Motor neuron (in vitro differentiated cells): ENCODE measurements at regions of chr3 and their contacts with region 1.

Region 1: DNA sequence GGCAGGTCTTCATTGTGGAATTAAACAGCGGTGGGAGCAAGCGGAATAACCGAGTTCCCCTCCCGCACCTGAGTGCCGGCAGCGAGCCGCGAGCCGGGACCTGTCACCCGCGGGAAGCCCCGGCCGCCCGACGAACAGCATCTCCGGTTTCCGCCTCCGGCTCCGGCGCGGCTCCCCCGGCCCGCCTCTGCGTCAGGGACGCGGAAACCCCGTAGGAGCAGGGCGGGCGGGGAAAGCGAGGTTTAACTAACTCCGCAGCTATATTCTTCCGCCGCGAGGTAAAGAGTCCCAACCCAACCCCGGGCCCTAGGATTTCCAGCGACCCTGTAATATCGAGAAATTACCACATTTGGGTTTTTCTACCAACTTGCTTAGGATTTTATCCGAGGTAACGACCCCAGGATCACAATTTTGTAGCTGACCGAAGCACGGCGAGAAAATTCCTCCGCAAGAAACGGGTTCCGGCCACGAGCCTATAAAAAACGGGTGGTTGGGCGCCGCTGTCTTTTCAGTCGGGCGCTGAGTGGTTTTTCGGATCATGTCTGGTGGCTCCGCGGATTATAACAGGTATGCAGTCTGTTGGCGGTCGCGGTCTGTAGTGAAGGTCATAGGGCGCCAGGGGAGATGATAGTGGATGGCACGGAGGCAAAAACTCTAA is at the start of gene EIF4A2:
- ATAC-seq: peak; percentile 64 to 81 (median 74)
- H3K4me3 ChIP-seq: peak within 1 kb of the TSS; percentile 88 to 95 (median 93)
- H3K27ac ChIP-seq: peak within 1 kb of the TSS; percentile 100
- H3K4me1 ChIP-seq: peaks cover 9 to 29% of the 10 kb centered on the region in 2 donors
- total RNA-seq, gene EIF4A2: 454 to 797 (median 662) TPM

Region 2: DNA sequence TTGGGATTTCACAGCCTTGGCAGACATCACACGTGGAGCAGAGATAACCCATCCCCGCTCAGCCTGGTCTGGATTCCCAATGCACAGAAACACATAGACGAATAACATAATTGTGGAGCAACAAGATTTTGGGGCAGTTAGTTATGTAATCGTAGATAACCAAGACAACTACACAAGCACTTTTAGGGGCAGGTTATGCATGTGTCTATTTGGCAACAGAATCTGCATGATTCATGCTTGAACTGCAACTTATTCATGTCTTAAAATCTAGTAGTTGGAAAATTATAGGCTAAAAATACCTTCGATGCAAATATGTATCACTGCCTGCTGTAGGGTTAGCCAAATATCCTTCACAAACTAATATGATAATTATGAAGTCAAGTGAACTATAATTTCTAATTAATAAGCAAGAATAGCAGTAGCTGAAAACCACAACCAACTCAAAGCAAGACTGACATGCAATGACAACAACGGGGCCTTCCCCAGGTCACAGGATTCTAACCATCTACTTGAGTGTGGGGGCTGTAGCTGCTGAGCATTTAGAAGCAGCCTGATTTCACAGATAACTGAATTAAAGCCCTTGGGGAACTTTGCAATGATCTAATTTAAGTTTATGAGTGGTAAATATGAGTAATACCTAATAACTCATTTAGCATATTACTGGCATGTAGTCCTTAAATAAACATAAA is 452.3 kb before region 1 on chr3:
- in situ Hi-C with region 1: no loop called
- ATAC-seq: peak in 2 of 8 experiments; percentile 74 to 83
- H3K4me3 ChIP-seq: no peak overlapping the region
- H3K27ac ChIP-seq: no peak overlapping the region
- H3K4me1 ChIP-seq: peaks cover 0 to 3% of the 10 kb centered on the region in 2 donors

Region 3: GRCh38 chr3:186589121-186589520 is 194.1 kb before region 1 on chr3:
- in situ Hi-C with region 1: loop called in 1 of 9 experiments (anchors 25 kb)
- ATAC-seq: peak in 2 of 8 experiments; percentile 45 to 52
- H3K4me3 ChIP-seq: no peak overlapping the region
- H3K27ac ChIP-seq: no peak overlapping the region
- H3K4me1 ChIP-seq: no peaks in the 10 kb centered on the region